Cardiac septum (tissue), 1 donor: ENCODE measurements at regions of chr10 and their contacts with region 1.

Region 1: GRCh38 chr10:112314822-112315474 is 31.7 kb downstream of the TECTB start:
- DNase-seq: peak; percentile 82

Region 2: DNA sequence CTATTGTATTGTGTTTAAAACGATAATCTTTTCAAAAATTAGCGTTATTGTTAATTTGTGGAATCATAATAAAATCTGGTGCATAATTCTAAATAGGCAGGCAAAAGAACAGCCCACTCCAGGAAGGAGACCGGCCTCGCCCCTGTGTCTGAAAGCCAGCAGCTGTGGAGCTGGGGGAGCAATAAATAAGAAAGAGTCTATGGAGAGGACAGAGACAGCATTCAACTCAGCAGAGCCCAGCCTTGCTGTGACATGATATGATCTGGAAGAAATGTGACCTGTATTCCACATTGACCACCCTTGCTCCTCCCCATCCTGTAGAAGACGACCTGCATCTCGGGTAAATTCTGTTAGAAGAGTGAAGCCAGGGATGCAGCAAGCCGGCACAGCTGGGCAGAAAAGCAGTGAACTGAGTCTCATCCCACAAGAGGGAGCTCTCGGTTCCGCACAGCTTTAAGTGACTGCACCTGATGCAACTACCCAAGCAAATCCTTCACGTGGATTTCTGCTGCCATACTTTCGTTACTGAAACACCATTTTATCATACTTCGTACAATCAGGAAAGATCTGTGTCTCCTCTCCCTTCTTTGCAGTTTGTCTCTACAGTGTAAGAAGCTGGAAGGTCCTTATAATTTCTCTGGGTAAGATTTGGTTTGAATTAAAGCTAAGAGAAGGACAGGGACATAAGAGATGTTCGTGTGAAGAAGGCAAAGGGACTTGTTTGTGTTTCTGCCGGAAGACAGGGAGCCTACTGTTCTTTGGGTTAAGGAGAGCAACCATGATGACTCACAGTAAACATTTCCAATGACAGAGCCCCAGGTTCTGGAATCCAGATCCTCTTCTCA is 558.5 kb before region 1 on chr10:
- intact Hi-C with region 1: loop called (anchors 10 kb)
- DNase-seq: no peak

Region 3: GRCh38 chr10:112137154-112137987 is 177.6 kb before region 1 on chr10:
- intact Hi-C with region 1: loop called (anchors 5 kb)
- DNase-seq: no peak

Region 4: GRCh38 chr10:112434988-112435619 is 120.2 kb after region 1 on chr10:
- intact Hi-C with region 1: loop called (anchors 10 kb)
- DNase-seq: no peak